ENCODE measurements at regions of chr11 and their contacts with region 1.

Region 1: GRCh38 chr11:75577207-75577606 is 15.2 kb downstream of the SERPINH1 start:
- DNase-seq: peak; percentile 78
- ATAC-seq: peak; percentile 5; the same call in 1 of the 2 replicates
- H3K4me3 Mint-ChIP-seq: no peak overlapping the region
- H3K27ac Mint-ChIP-seq: no peak overlapping the region
- H3K4me1 Mint-ChIP-seq: peaks cover 18% of the 10 kb centered on the region
- H3K27me3 Mint-ChIP-seq: peaks cover 13% of the 10 kb centered on the region
- CTCF ChIP-seq: peak; percentile 56; the same call in 1 of the 2 replicates

Region 2: GRCh38 chr11:75508044-75508561 is 69.1 kb before region 1 on chr11:
- CTCF ChIA-PET with region 1: no interaction called
- POLR2A ChIA-PET with region 1: no interaction called
- DNase-seq: no peak
- ATAC-seq: no peak
- H3K4me3 Mint-ChIP-seq: no peak overlapping the region
- H3K27ac Mint-ChIP-seq: no peak overlapping the region
- H3K4me1 Mint-ChIP-seq: no peaks in the 10 kb centered on the region
- H3K27me3 Mint-ChIP-seq: no peaks in the 10 kb centered on the region
- CTCF ChIP-seq: no peak

Region 3: DNA sequence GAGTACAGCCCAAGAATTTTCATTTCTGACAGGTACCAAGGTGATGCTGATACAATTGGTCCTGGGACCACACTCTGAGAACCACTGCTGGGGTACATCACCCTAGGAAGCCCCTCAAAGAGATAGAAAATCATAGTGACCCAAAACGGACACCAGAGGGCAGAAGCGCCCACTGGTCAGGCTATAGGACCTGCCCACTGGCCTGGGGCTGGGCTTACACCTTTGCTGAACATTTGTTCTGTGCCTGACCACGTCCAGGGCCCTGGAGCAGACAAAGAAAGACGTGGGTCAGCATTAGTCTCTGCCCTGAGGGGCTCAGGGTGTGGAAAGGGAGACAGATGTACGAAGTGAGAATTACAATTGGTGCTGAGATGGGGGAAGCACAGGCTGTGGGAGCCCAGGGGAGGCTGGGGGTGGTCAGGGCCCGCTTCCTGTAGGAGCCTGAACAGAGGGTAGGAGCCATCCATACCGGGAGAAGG is 29.6 kb before region 1 on chr11:
- CTCF ChIA-PET with region 1: interaction called, 23 read pairs
- POLR2A ChIA-PET with region 1: interaction called, 6 read pairs
- DNase-seq: peak; percentile 84
- ATAC-seq: peak; percentile 92
- H3K4me3 Mint-ChIP-seq: no peak overlapping the region
- H3K27ac Mint-ChIP-seq: peak overlapping the region; percentile 85; the same call in 1 of the 2 replicates
- H3K4me1 Mint-ChIP-seq: peaks cover 9% of the 10 kb centered on the region
- H3K27me3 Mint-ChIP-seq: peaks cover 6% of the 10 kb centered on the region; the same call in 1 of the 2 replicates
- CTCF ChIP-seq: peak; percentile 68

Region 4: DNA sequence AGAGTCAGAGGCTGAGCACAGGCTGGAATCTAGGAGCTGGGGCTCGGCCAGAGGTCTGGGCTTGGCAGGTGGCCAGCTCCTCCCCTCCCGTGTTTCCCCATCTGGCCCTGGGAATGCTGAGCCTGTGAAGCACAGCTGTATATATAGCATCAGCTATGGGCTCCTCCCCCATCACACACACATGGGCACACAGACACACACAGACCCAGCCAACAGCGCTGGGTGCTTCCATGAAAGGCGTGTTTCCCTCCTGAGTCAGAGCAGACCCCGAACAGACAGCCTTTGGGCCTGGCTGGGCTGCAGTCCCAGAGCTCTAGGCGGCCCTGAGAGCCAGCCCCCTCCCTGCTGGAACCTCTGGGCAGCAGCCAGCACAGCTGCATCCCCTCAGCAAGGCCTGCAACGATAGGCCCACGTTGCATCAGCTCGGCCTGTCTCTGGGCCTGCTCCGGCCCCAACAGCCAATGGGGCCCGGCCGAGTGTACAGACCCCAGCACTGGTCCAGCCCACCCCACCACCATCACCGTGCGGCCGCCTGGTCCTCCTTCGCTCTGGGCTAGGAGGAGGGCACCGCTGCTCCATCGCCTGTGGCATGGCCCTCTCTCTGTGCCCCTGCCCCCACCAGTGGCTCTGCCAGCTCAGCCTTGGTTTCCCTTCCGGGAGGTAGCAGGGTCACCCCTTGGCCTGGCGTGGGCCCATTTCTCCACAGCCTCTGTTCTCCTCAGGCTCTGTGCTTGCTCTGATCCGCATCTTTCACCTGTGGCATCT is 22.8 kb before region 1 on chr11:
- CTCF ChIA-PET with region 1: interaction called, 21 read pairs
- POLR2A ChIA-PET with region 1: interaction called, 27 read pairs
- DNase-seq: peak; percentile 89
- ATAC-seq: peak; percentile 95
- H3K4me3 Mint-ChIP-seq: peak overlapping the region; percentile 32; the same call in 1 of the 2 replicates
- H3K27ac Mint-ChIP-seq: peak overlapping the region; percentile 96
- H3K4me1 Mint-ChIP-seq: peaks cover 48% of the 10 kb centered on the region
- H3K27me3 Mint-ChIP-seq: peaks cover 2% of the 10 kb centered on the region; the same call in 1 of the 2 replicates
- CTCF ChIP-seq: no peak

Region 5: DNA sequence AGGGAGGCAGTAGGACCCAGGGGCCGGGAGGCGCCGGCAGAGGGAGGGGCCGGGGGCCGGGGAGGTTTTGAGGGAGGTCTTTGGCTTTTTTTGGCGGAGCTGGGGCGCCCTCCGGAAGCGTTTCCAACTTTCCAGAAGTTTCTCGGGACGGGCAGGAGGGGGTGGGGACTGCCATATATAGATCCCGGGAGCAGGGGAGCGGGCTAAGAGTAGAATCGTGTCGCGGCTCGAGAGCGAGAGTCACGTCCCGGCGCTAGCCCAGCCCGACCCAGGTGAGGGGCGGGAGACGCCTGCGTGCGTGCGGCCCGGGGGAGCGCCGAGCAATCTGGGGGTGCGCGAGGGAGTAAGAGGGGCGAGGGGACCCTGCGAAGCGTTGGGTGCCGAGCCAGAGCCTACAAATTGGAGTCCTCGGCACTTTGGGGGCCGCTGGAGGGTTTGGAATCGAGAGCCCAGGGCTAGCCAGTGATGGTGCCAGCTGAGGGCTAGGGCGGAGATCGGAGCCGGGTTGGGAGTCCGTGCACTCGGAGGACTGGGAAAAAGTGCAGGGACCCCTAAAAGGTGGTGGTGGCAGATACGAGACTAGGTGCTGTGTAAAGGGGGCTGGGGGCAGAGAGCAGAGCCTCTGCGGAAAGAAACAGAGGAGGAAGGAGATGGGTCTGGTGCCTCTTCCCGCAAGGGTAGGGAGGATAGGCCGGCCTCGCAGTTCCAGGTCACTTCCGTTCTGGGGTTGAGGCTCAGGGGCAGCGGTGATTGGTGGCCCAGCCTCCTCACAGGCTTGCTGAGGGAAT is 15.0 kb before region 1 on chr11 and contains the start of gene SERPINH1:
- CTCF ChIA-PET with region 1: interaction called, 46 read pairs
- POLR2A ChIA-PET with region 1: interaction called, 26 read pairs
- DNase-seq: peak; percentile 78
- ATAC-seq: peak; percentile 58
- H3K4me3 Mint-ChIP-seq: peak within 1 kb of the TSS; percentile 96
- H3K27ac Mint-ChIP-seq: peak within 1 kb of the TSS; percentile 99
- H3K4me1 Mint-ChIP-seq: peaks cover 74% of the 10 kb centered on the region
- H3K27me3 Mint-ChIP-seq: no peaks in the 10 kb centered on the region
- CTCF ChIP-seq: no peak
- total RNA-seq, gene SERPINH1: 411 to 478 TPM (median 473 TPM) in 3 replicates

Region 6: DNA sequence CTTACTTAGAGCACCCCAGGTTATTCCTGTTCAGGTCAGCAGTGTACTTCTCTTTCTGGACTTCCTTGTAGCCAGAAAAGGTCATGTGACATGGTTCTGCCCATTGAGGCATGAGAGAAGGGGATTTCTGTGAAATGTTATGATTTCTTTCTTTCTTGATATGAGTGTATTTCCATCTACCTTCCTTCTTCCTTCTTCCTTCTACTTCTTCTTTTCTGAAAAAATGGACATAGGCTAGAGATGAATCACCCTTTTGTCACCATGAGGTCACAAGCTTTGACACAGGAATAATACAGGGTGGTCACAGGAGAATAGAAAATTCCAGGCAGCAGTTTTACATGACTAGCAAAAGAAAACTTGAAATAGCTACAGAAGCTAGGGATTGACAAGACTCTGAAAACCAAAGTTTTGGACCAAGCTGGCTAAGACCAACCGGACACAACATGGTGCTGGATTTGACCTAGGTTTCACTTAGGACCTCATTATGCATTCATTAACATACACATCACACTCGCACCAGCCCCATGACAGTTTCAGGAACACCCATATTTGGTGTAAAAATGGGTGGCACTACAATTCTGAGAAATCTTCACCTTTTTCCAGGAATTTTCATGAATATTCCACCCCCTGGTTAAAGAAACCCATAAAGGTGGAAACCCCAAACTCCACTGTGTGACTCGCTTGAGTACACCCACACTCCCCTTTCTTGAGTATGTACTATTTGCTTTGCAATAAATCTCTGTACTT is 112.8 kb after region 1 on chr11:
- CTCF ChIA-PET with region 1: no interaction called
- POLR2A ChIA-PET with region 1: no interaction called
- DNase-seq: no peak
- ATAC-seq: no peak
- H3K4me3 Mint-ChIP-seq: no peak overlapping the region
- H3K27ac Mint-ChIP-seq: no peak overlapping the region
- H3K4me1 Mint-ChIP-seq: no peaks in the 10 kb centered on the region
- H3K27me3 Mint-ChIP-seq: peaks cover 23% of the 10 kb centered on the region
- CTCF ChIP-seq: no peak

Region 7: DNA sequence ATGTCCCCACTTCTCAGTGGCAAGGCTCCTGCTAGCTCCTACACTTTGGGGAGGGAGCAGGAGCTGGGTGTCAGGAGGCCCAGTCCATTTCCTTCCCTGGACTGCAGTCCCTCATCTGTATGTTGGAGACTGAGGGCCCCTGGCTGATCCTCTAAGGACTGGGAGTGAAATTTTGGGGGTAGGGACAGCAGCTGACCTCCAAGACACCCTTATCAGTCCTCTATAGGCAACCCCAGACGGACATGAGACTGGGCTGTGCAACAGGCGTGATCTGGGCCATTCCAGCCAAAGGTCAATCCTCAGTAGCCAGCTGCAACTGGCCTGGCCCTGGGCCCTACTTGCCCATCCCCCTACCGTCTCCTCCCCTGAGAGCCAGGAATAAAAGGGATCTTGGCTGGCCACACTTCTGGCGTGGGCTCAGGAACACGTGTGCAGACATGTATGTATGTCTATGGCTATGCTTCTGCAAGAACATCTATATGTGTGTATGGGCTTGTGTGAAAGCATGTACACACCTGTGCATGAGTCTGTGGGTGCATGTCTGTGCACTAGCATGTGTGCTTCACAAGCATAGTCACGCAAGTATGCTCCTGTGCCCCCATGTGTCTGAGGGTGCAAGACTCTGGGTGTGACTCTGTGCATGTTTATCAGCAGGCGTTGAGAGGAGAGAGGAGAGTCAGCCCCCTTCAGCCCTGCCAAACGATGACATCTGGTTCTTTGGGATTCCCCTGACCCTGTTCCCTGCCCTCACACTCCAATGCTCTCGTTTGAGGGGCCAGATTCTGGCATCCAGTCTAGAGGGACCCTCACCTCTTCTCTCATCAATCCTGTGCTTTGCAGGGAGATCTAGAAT is 166.7 kb after region 1 on chr11:
- CTCF ChIA-PET with region 1: no interaction called
- POLR2A ChIA-PET with region 1: no interaction called
- DNase-seq: no peak
- ATAC-seq: no peak
- H3K4me3 Mint-ChIP-seq: no peak overlapping the region
- H3K27ac Mint-ChIP-seq: no peak overlapping the region
- H3K4me1 Mint-ChIP-seq: peaks cover 12% of the 10 kb centered on the region
- H3K27me3 Mint-ChIP-seq: peaks cover 30% of the 10 kb centered on the region
- CTCF ChIP-seq: no peak

Region 8: DNA sequence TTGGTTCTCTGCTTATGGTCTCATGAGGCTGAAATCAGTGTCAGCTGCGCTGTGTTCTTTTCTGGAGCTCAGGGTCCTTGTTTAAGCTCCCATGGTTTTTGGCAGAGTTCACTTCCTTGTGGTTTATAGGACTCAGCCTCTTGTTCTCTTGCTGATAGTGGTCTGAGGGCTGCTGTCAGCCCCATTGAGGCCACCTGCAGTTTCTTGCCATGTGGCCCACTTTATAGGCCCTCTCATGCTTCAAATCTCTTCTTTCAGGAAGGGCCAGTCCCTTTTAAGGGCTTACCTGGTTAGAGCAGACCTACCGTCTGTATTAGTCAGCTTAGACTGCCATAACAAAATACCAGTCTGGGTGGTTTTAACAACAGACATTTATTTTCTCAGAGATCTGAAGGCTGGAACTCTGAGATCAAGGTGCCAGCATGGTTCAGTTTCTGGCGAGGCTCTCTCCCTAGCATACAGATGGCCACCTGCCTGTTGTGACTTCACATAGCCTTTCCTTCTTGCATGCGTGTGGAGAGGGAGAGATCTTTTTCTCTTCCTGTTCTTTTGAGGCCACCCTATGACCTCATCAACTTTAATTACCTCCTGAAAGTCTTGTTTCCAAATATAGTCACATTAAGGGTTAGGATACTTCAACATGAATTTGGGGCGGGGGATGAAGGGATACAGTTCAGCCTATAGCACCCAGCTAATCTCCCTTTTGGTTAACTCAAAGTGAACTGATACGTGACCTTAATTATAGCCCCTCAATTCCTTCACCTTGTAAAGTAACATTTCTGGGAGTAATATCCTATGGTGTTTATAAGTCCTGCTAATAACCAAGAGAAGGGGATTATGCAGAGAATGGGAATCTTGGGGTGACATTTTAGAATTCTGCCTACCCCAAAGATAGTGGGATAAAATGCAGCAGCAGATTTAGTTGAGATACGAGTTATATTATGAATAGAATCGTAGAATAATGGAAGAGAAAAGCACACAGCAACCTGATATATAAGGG is 369.6 kb after region 1 on chr11:
- CTCF ChIA-PET with region 1: no interaction called
- POLR2A ChIA-PET with region 1: no interaction called
- DNase-seq: no peak
- ATAC-seq: peak; percentile 77
- H3K4me3 Mint-ChIP-seq: no peak overlapping the region
- H3K27ac Mint-ChIP-seq: no peak overlapping the region
- H3K4me1 Mint-ChIP-seq: peaks cover 24% of the 10 kb centered on the region
- H3K27me3 Mint-ChIP-seq: no peaks in the 10 kb centered on the region
- CTCF ChIP-seq: no peak

Measured in WTC11 (cell line).